ENCODE measurements at regions of chr20 and their contacts with region 1.

Region 1: DNA sequence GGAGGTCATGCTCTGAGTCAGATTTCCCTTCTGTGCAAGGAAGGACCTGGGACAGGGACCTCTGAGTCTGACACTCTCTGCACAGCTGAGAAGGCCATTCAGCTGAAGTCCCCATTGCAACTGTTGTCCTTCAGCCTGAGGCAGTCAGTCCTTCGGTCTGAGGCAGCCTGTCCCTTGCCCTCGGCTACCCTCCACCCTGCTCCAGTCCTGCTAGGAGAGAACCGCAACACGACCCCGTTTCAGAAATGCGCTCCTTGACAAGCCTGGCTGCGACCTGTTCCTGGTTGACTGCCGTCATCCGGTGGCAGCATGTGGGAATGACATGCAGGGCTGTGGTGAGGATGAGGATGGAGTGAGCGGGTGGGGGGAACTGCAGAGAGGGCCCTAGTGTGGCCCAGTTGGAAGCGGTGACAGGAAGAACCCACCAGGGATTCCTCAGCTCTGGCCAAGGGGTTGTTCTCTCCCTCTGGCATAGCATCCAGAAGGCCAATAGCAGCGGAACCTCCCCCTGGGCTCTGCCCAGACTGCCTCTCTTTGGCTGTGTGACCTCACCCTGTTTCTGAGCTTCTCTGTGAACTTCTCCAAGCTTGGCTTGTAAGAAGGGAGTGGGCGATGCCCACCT is 40.3 kb upstream of the ANGPT4 start:
- DNase-seq: no peak
- H3K4me3 ChIP-seq: no peak overlapping the region
- CTCF ChIP-seq: peak; percentile 96

Region 2: DNA sequence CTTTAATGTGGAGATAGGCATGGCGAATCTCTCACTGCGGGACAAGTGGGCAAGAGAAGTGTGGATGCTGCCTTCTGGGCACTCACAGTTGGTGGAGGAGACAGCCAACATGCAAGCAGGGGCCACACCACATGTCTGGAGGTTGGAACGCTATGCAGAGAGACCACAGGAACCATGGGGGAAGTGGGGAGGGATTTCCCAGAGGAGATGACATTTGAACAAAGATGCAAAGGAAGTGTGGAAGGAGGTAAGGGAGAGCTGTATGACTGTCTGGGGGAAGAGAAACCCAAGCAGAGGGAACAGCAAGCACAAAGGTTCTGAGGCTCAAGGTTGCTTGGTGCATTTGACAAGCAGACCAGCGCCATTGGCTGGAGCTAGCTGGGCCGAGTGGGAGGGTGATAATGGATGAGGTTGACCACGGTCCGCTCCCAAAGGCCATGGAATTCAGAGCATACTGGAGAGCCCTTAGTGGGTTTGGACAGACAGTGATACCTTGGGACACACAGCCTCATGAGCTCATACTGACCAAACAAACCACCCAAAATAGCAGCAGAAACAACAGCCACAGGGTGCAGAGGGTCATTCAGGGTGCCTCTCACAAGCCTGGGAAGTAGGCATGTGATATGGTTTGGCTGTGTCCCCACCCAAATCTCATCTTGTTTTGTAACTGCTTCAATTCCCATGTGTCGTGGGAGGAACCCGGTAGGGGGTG is 130.6 kb before region 1 on chr20:
- CTCF ChIA-PET with region 1: interaction called, 355 read pairs
- POLR2A ChIA-PET with region 1: no interaction called
- DNase-seq: no peak
- H3K4me3 ChIP-seq: no peak overlapping the region
- CTCF ChIP-seq: no peak

Region 3: GRCh38 chr20:839015-839414 is 117.4 kb before region 1 on chr20:
- CTCF ChIA-PET with region 1: interaction called, 32 read pairs
- POLR2A ChIA-PET with region 1: no interaction called
- DNase-seq: no peak
- H3K4me3 ChIP-seq: no peak overlapping the region
- CTCF ChIP-seq: no peak

Region 4: GRCh38 chr20:969868-970267 is 13.4 kb after region 1 on chr20:
- CTCF ChIA-PET with region 1: interaction called, 16 read pairs
- POLR2A ChIA-PET with region 1: no interaction called
- DNase-seq: no peak
- H3K4me3 ChIP-seq: no peak overlapping the region
- CTCF ChIP-seq: no peak

Region 5: GRCh38 chr20:995170-995569 is 38.7 kb after region 1 on chr20:
- CTCF ChIA-PET with region 1: no interaction called
- POLR2A ChIA-PET with region 1: no interaction called
- DNase-seq: no peak
- H3K4me3 ChIP-seq: no peak overlapping the region
- CTCF ChIP-seq: no peak

Measured in AG04449 (cell line).